ENCODE measurements at regions of chr10 and their contacts with region 1.

Region 1: GRCh38 chr10:127935071-127935561 is 28.2 kb downstream of the PTPRE start:
- DNase-seq: no peak
- H3K4me3 ChIP-seq: no peak overlapping the region
- H3K27ac ChIP-seq: no peak overlapping the region
- H3K4me1 ChIP-seq: peaks cover 9 to 12% of the 10 kb centered on the region in 2 experiments; a peak in 2 of 4 replicates
- H3K27me3 ChIP-seq: no peaks in the 10 kb centered on the region
- CTCF ChIP-seq: no peak
- EP300 ChIP-seq: no peak
- RAD21 ChIP-seq: no peak

Region 2: GRCh38 chr10:127919418-127920271 is 15.5 kb before region 1 on chr10:
- CTCF ChIA-PET with region 1: interaction called, 10 read pairs
- POLR2A ChIA-PET with region 1: no interaction called
- DNase-seq: peak; percentile 64
- H3K4me3 ChIP-seq: no peak overlapping the region
- H3K27ac ChIP-seq: peak overlapping the region; percentile 40 to 58; a peak in 3 of 4 replicates
- H3K4me1 ChIP-seq: peaks cover 22 to 35% of the 10 kb centered on the region in 2 experiments; a peak in 3 of 4 replicates
- H3K27me3 ChIP-seq: no peaks in the 10 kb centered on the region
- CTCF ChIP-seq: peak; percentile 46
- EP300 ChIP-seq: no peak
- RAD21 ChIP-seq: no peak

Measured in SK-N-SH (cell line).